Activated B cell treated with CpG ODN at 0.5 μM for 24 hours (primary cell): ENCODE measurements at regions of chr4 and their contacts with region 1.

Region 1: DNA sequence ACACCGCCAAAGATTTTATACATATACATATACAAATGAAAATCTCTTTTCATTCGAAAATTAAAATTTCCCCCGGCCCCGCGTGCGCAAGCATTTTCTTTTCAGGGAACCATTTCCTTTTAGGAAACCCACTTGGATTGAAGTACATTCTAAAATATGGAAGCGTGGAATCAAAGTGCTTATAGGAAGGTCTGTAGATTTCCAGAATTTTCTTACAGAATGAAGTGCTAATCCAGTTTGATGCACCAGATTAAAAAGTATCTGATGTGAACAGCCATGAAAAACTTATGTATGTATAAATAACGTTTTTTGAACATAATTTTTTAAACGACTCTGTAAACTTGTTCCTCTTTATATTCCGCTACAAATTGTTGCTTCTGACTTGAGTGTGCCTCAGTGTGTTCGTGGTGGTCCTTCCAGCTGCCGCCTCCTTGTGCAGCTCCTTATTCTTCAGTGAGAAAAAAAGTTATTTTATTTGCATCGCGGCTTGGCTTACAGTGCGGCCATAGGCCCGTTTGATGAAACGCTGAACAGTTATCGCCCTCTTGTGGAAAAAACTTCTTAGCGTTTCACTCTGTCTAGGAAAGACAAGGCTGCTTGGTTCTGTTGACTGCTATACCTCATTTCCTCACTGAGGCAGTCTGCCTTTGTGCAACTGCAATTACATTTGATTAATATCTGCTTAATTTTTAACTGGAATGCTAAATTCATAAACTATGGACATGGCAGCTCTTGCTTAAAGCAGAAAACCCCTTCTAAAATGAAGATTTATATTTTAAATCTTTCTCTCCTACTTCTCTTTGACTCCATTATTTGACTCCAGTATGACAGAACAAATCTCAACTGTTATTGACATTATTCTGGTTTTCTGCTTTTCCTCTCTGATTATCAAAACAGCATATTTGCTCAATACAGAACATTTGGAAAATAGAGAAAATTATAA is 4.7 kb upstream of the NKX6-1 start:
- DNase-seq: no peak
- ATAC-seq: no peak
- H3K4me3 Mint-ChIP-seq: no peak overlapping the region
- H3K27ac Mint-ChIP-seq: no peak overlapping the region
- H3K4me1 Mint-ChIP-seq: peaks cover 10% of the 10 kb centered on the region
- H3K27me3 Mint-ChIP-seq: peaks cover 67% of the 10 kb centered on the region
- CTCF ChIP-seq: no peak

Region 2: DNA sequence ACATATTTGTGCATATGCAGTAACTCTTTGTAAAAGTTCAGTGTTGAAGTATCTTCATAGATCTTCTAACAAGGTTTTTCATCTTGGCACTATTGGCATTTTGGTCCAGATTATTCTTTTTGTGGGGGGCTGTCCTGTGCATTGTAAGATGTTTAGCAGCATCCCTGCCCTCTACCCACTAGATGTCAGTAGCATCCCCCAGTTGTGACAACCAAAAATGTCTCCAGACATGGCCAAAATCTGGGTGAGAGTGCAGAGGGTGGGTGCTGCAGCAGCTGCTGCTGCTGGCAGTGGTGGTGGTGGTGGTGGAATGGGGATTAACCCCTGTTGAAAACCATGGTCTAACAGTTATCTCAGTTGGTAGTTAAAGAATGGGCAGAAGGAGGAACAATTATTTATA is 597.8 kb before region 1 on chr4:
- CTCF ChIA-PET with region 1: no interaction called
- POLR2A ChIA-PET with region 1: no interaction called
- intact Hi-C with region 1: no loop called
- DNase-seq: no peak
- ATAC-seq: no peak
- H3K4me3 Mint-ChIP-seq: no peak overlapping the region
- H3K27ac Mint-ChIP-seq: no peak overlapping the region
- H3K4me1 Mint-ChIP-seq: no peaks in the 10 kb centered on the region
- H3K27me3 Mint-ChIP-seq: peaks cover 2% of the 10 kb centered on the region
- CTCF ChIP-seq: no peak

Region 3: GRCh38 chr4:84582302-84583000 is 78.7 kb after region 1 on chr4:
- CTCF ChIA-PET with region 1: no interaction called
- POLR2A ChIA-PET with region 1: no interaction called
- intact Hi-C with region 1: loop called (anchors 5 kb)
- DNase-seq: peak; percentile 82
- ATAC-seq: peak; percentile 86
- H3K4me3 Mint-ChIP-seq: peak overlapping the region; percentile 78
- H3K27ac Mint-ChIP-seq: no peak overlapping the region
- H3K4me1 Mint-ChIP-seq: peaks cover 13% of the 10 kb centered on the region
- H3K27me3 Mint-ChIP-seq: peaks cover 55% of the 10 kb centered on the region
- CTCF ChIP-seq: no peak